ENCODE measurements at regions of chr10 and their contacts with region 1.

Region 1: DNA sequence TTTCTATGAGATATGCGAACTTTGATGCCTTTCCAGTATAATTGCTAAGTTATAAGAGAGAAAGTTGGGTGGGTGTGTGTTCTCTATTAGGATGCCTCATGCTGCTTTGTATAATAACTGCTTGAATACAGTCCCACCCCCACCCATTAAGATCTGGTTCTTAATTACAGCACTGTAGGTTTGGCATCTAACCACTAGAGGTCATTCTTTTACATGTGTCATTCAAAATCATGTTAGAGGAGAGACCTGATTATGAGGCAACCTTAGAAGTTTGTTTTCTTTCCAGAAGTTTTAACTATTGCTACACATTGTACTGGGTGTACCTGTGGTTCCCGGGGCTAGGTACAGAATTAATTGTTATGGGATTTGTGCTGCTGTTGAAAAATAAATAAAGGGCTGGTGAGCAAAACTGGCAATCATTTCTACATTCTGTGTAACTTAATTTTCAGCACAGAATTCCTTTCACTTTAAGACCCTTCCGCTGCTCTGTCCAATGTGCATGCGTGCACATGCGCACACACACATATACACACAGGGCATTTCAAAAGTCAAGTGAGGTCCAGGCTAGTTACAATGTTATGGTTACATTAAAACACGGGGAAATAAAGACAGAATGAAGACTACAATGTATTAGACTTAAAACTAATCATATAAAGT is 1156.3 kb downstream of the SORCS3 start:
- DNase-seq: peak; percentile 5
- ATAC-seq: peak; percentile 97
- H3K4me3 ChIP-seq: no peak overlapping the region
- H3K27ac ChIP-seq: no peak overlapping the region
- H3K4me1 ChIP-seq: no peaks in the 10 kb centered on the region
- H3K27me3 ChIP-seq: no peaks in the 10 kb centered on the region
- CTCF ChIP-seq: peak; percentile 57 to 71 (median 59); a peak in 5 of 6 replicates
- EP300 ChIP-seq: no peak
- POLR2A ChIP-seq: no peak
- RAD21 ChIP-seq: peak; percentile 71

Region 2: GRCh38 chr10:105473170-105473569 is 324.2 kb before region 1 on chr10:
- CTCF ChIA-PET with region 1: no interaction called
- POLR2A ChIA-PET with region 1: no interaction called
- RAD21 ChIA-PET with region 1: no interaction called
- SMC1A ChIA-PET with region 1: no interaction called
- in situ Hi-C with region 1: no loop called
- intact Hi-C with region 1: no loop called
- DNase-seq: no peak
- ATAC-seq: no peak
- H3K4me3 ChIP-seq: no peak overlapping the region
- H3K27ac ChIP-seq: no peak overlapping the region
- H3K4me1 ChIP-seq: no peaks in the 10 kb centered on the region
- H3K27me3 ChIP-seq: no peaks in the 10 kb centered on the region
- CTCF ChIP-seq: no peak
- EP300 ChIP-seq: no peak
- POLR2A ChIP-seq: no peak
- RAD21 ChIP-seq: no peak

Region 3: GRCh38 chr10:105875050-105875449 is 77.7 kb after region 1 on chr10:
- CTCF ChIA-PET with region 1: interaction called, 3 read pairs
- POLR2A ChIA-PET with region 1: no interaction called
- RAD21 ChIA-PET with region 1: no interaction called
- SMC1A ChIA-PET with region 1: interaction called, 3 read pairs
- in situ Hi-C with region 1: no loop called
- intact Hi-C with region 1: loop called (anchors 5 kb)
- DNase-seq: no peak
- ATAC-seq: peak; percentile 79
- H3K4me3 ChIP-seq: no peak overlapping the region
- H3K27ac ChIP-seq: no peak overlapping the region
- H3K4me1 ChIP-seq: no peaks in the 10 kb centered on the region
- H3K27me3 ChIP-seq: no peaks in the 10 kb centered on the region
- CTCF ChIP-seq: no peak
- EP300 ChIP-seq: no peak
- POLR2A ChIP-seq: no peak
- RAD21 ChIP-seq: no peak

Region 4: DNA sequence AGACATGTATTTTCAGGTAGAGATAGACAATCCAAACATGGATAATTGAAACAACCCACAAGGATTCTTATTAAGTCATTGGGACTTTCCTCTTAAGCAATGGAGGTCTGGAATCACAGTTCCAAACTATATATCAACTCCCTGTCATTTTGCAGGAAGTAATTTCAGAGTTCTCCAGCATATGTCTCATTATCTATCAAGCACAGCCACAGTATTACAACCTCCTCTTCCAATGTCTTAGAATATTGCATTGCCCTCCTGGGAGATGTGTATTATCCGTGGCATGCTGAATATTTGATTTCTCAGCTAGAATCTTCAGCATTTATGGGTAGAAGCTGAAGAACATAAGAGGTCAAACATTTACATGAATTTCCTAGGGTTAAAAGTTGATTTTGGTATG is 111.3 kb after region 1 on chr10:
- CTCF ChIA-PET with region 1: no interaction called
- POLR2A ChIA-PET with region 1: no interaction called
- RAD21 ChIA-PET with region 1: no interaction called
- SMC1A ChIA-PET with region 1: interaction called, 3 read pairs
- in situ Hi-C with region 1: no loop called
- intact Hi-C with region 1: loop called (anchors 5 kb)
- DNase-seq: no peak
- ATAC-seq: no peak
- H3K4me3 ChIP-seq: no peak overlapping the region
- H3K27ac ChIP-seq: no peak overlapping the region
- H3K4me1 ChIP-seq: no peaks in the 10 kb centered on the region
- H3K27me3 ChIP-seq: no peaks in the 10 kb centered on the region
- CTCF ChIP-seq: no peak
- EP300 ChIP-seq: no peak
- POLR2A ChIP-seq: no peak
- RAD21 ChIP-seq: no peak

Region 5: DNA sequence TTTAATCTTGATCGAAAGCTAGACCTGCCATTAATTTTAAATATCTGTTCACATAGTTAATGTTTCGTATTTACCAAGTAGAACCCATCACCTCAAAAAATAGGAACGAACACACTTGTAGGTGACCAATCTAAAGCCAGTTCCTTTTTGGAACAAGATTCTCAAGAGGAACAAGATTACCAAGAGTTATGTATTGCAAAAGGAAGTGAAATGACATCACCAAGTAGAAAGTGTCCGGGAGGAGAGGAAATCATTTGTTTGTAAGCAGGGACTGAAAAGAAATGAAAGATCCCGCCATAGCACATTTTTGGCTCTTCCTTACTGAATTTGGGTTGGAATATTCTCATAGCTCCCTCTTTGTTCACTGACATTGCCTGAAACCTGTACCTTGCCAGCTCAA is 166.6 kb after region 1 on chr10:
- CTCF ChIA-PET with region 1: no interaction called
- POLR2A ChIA-PET with region 1: no interaction called
- RAD21 ChIA-PET with region 1: no interaction called
- SMC1A ChIA-PET with region 1: no interaction called
- in situ Hi-C with region 1: no loop called
- intact Hi-C with region 1: no loop called
- DNase-seq: no peak
- ATAC-seq: no peak
- H3K4me3 ChIP-seq: no peak overlapping the region
- H3K27ac ChIP-seq: no peak overlapping the region
- H3K4me1 ChIP-seq: no peaks in the 10 kb centered on the region
- H3K27me3 ChIP-seq: no peaks in the 10 kb centered on the region
- CTCF ChIP-seq: no peak
- EP300 ChIP-seq: no peak
- POLR2A ChIP-seq: no peak
- RAD21 ChIP-seq: no peak

Region 6: DNA sequence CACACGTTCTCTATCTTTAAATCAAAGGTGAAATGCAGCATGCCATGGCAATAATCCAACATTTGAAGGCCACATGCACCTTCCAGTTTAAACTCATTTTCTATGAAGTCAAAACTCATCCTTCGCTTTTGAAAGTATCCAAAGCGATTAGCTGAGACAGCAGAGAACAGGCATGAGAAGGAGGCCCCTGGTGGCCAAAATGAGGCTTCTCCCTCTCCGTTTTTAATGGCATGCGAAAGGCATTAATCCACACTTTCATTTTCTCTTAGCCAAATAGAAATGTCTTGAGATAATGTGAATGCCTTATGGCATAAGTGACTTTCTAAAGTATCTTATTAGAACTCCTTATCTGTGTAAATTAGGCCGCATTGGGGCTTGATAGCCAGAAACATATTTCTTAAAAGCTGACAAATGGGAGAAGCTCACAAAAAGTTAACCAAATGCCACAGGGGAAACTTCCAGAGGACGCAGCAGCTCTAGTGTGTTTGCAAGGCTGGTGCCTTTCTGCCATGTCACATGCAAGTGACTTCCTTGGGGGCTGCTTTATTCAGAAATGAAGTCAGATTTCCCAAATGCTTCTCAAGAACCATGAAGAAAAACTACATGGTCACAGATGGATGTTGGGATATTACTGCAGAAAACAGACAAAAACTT is 177.6 kb after region 1 on chr10:
- CTCF ChIA-PET with region 1: interaction called, 12 read pairs
- POLR2A ChIA-PET with region 1: no interaction called
- RAD21 ChIA-PET with region 1: interaction called, 4 read pairs
- SMC1A ChIA-PET with region 1: interaction called, 13 read pairs
- in situ Hi-C with region 1: no loop called
- intact Hi-C with region 1: loop called (anchors 5 kb)
- DNase-seq: no peak
- ATAC-seq: peak; percentile 91
- H3K4me3 ChIP-seq: no peak overlapping the region
- H3K27ac ChIP-seq: no peak overlapping the region
- H3K4me1 ChIP-seq: no peaks in the 10 kb centered on the region
- H3K27me3 ChIP-seq: no peaks in the 10 kb centered on the region
- CTCF ChIP-seq: peak; percentile 45 to 55 (median 47); a peak in 5 of 6 replicates
- EP300 ChIP-seq: no peak
- POLR2A ChIP-seq: no peak
- RAD21 ChIP-seq: peak; percentile 26; the same call in 1 of the 2 replicates

Region 7: GRCh38 chr10:106023329-106023728 is 226.0 kb after region 1 on chr10:
- CTCF ChIA-PET with region 1: no interaction called
- POLR2A ChIA-PET with region 1: no interaction called
- RAD21 ChIA-PET with region 1: no interaction called
- SMC1A ChIA-PET with region 1: no interaction called
- in situ Hi-C with region 1: no loop called
- intact Hi-C with region 1: no loop called
- DNase-seq: no peak
- ATAC-seq: no peak
- H3K4me3 ChIP-seq: no peak overlapping the region
- H3K27ac ChIP-seq: no peak overlapping the region
- H3K4me1 ChIP-seq: no peaks in the 10 kb centered on the region
- H3K27me3 ChIP-seq: no peaks in the 10 kb centered on the region
- CTCF ChIP-seq: no peak
- EP300 ChIP-seq: no peak
- POLR2A ChIP-seq: no peak
- RAD21 ChIP-seq: no peak

Region 8: GRCh38 chr10:106175760-106176377 is 378.5 kb after region 1 on chr10:
- CTCF ChIA-PET with region 1: no interaction called
- POLR2A ChIA-PET with region 1: no interaction called
- RAD21 ChIA-PET with region 1: no interaction called
- SMC1A ChIA-PET with region 1: no interaction called
- in situ Hi-C with region 1: loop called (anchors 10 kb)
- intact Hi-C with region 1: loop called (anchors 2 kb)
- DNase-seq: no peak
- ATAC-seq: 0 out of 3 replicates have a peak, but pooled peaks have one; percentile 31
- H3K4me3 ChIP-seq: no peak overlapping the region
- H3K27ac ChIP-seq: no peak overlapping the region
- H3K4me1 ChIP-seq: no peaks in the 10 kb centered on the region
- H3K27me3 ChIP-seq: no peaks in the 10 kb centered on the region
- CTCF ChIP-seq: peak in 2 of 3 experiments; percentile 36 to 37; a peak in 3 of 6 replicates
- EP300 ChIP-seq: no peak
- POLR2A ChIP-seq: no peak
- RAD21 ChIP-seq: peak; percentile 52

Region 9: DNA sequence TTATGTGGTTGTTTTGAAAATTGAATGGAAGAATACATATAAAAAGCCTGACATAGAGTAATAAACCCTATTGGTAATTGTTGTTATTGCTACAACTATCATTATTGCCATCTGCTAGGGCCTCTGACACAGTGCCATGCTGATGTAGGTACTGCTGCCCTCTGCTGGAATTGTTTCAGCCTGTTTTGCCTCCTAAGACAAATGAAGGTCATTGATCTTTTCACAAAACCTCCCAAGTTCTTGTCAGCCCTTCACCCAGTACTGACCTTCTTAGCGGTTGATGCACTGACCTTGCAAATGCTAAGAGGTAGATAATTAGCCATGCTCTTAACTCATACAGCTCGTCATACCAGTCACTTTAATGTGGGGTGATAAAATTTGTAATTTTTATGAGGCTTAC is 391.9 kb after region 1 on chr10:
- CTCF ChIA-PET with region 1: interaction called, 3 read pairs
- POLR2A ChIA-PET with region 1: no interaction called
- RAD21 ChIA-PET with region 1: no interaction called
- SMC1A ChIA-PET with region 1: no interaction called
- in situ Hi-C with region 1: loop called (anchors 10 kb)
- intact Hi-C with region 1: no loop called
- DNase-seq: no peak
- ATAC-seq: peak; percentile 90
- H3K4me3 ChIP-seq: no peak overlapping the region
- H3K27ac ChIP-seq: no peak overlapping the region
- H3K4me1 ChIP-seq: no peaks in the 10 kb centered on the region
- H3K27me3 ChIP-seq: no peaks in the 10 kb centered on the region
- CTCF ChIP-seq: peak; percentile 52 to 56 (median 54)
- EP300 ChIP-seq: no peak
- POLR2A ChIP-seq: no peak
- RAD21 ChIP-seq: peak; percentile 48

Measured in GM12878 (cell line).